Caco-2 (cell line): ENCODE measurements at regions of chr4 and their contacts with region 1.

Region 1: GRCh38 chr4:157978680-157979361 is 194.0 kb downstream of the GASK1B start:
- DNase-seq: peak in 1 of 2 experiments; percentile 25
- H3K4me3 ChIP-seq: no peak overlapping the region
- H3K4me3 Mint-ChIP-seq: no peak overlapping the region
- H3K27ac Mint-ChIP-seq: no peak overlapping the region
- H3K4me1 ChIP-seq: no peaks in the 10 kb centered on the region
- H3K4me1 Mint-ChIP-seq: peaks cover 14% of the 10 kb centered on the region
- H3K27me3 ChIP-seq: no peaks in the 10 kb centered on the region
- H3K27me3 Mint-ChIP-seq: no peaks in the 10 kb centered on the region
- CTCF ChIP-seq: peak; percentile 33 to 52

Region 2: DNA sequence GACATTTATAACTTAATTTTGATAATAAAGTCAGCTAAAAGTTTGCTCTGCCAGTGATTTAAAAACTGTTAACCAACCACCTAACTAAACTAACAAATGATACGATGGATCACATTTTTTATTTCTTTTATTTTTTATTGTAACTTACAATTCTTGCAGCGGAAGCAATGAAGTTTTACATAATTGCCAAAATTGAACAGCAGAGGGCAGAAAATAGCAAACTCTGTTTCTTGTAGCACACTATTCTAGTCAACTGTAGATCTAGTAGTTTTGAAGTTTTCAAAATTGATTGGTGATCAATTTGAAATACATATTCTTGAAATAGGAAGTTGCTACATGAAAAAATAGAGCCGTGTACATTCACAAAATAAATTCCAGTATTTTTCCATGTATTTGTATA is 761.1 kb before region 1 on chr4:
- CTCF ChIA-PET with region 1: no interaction called
- POLR2A ChIA-PET with region 1: no interaction called
- intact Hi-C with region 1: loop called (anchors 1 kb)
- DNase-seq: peak in 1 of 2 experiments; percentile 10
- H3K4me3 ChIP-seq: no peak overlapping the region
- H3K4me3 Mint-ChIP-seq: no peak overlapping the region
- H3K27ac Mint-ChIP-seq: no peak overlapping the region
- H3K4me1 ChIP-seq: no peaks in the 10 kb centered on the region
- H3K4me1 Mint-ChIP-seq: no peaks in the 10 kb centered on the region
- H3K27me3 ChIP-seq: no peaks in the 10 kb centered on the region
- H3K27me3 Mint-ChIP-seq: peaks cover 6% of the 10 kb centered on the region
- CTCF ChIP-seq: peak; percentile 32 to 51

Region 3: GRCh38 chr4:157514711-157515110 is 464.1 kb before region 1 on chr4:
- CTCF ChIA-PET with region 1: no interaction called
- POLR2A ChIA-PET with region 1: no interaction called
- intact Hi-C with region 1: loop called (anchors 1 kb)
- DNase-seq: peak in 1 of 2 experiments; percentile 20
- H3K4me3 ChIP-seq: no peak overlapping the region
- H3K4me3 Mint-ChIP-seq: no peak overlapping the region
- H3K27ac Mint-ChIP-seq: no peak overlapping the region
- H3K4me1 ChIP-seq: no peaks in the 10 kb centered on the region
- H3K4me1 Mint-ChIP-seq: no peaks in the 10 kb centered on the region
- H3K27me3 ChIP-seq: no peaks in the 10 kb centered on the region
- H3K27me3 Mint-ChIP-seq: no peaks in the 10 kb centered on the region
- CTCF ChIP-seq: peak in 1 of 2 experiments; percentile 54

Region 4: GRCh38 chr4:157582141-157582540 is 396.7 kb before region 1 on chr4:
- CTCF ChIA-PET with region 1: no interaction called
- POLR2A ChIA-PET with region 1: no interaction called
- intact Hi-C with region 1: no loop called
- DNase-seq: no peak
- H3K4me3 ChIP-seq: no peak overlapping the region
- H3K4me3 Mint-ChIP-seq: no peak overlapping the region
- H3K27ac Mint-ChIP-seq: no peak overlapping the region
- H3K4me1 ChIP-seq: no peaks in the 10 kb centered on the region
- H3K4me1 Mint-ChIP-seq: no peaks in the 10 kb centered on the region
- H3K27me3 ChIP-seq: no peaks in the 10 kb centered on the region
- H3K27me3 Mint-ChIP-seq: no peaks in the 10 kb centered on the region
- CTCF ChIP-seq: no peak

Region 5: GRCh38 chr4:157804986-157805385 is 173.8 kb before region 1 on chr4:
- CTCF ChIA-PET with region 1: no interaction called
- POLR2A ChIA-PET with region 1: no interaction called
- intact Hi-C with region 1: loop called (anchors 10 kb)
- DNase-seq: peak in 1 of 2 experiments; percentile 18
- H3K4me3 ChIP-seq: no peak overlapping the region
- H3K4me3 Mint-ChIP-seq: no peak overlapping the region
- H3K27ac Mint-ChIP-seq: no peak overlapping the region
- H3K4me1 ChIP-seq: peaks cover 9% of the 10 kb centered on the region; the same call in 1 of the 2 replicates
- H3K4me1 Mint-ChIP-seq: peaks cover 6% of the 10 kb centered on the region
- H3K27me3 ChIP-seq: no peaks in the 10 kb centered on the region
- H3K27me3 Mint-ChIP-seq: no peaks in the 10 kb centered on the region
- CTCF ChIP-seq: peak; percentile 17 to 34